ENCODE measurements at regions of chr2 and their contacts with region 1.

Region 1: GRCh38 chr2:18546567-18546966 is 13.9 kb downstream of the RDH14 start:
- DNase-seq: no peak
- ATAC-seq: no peak
- H3K4me3 ChIP-seq: no peak overlapping the region
- H3K27ac ChIP-seq: no peak overlapping the region
- H3K4me1 ChIP-seq: no peaks in the 10 kb centered on the region
- H3K27me3 ChIP-seq: no peaks in the 10 kb centered on the region
- CTCF ChIP-seq: no peak

Region 2: GRCh38 chr2:18369760-18370159 is 176.8 kb before region 1 on chr2:
- CTCF ChIA-PET with region 1: no interaction called
- POLR2A ChIA-PET with region 1: no interaction called
- in situ Hi-C with region 1: no loop called
- intact Hi-C with region 1: no loop called
- DNase-seq: no peak
- ATAC-seq: no peak
- H3K4me3 ChIP-seq: no peak overlapping the region
- H3K27ac ChIP-seq: no peak overlapping the region
- H3K4me1 ChIP-seq: no peaks in the 10 kb centered on the region
- H3K27me3 ChIP-seq: no peaks in the 10 kb centered on the region
- CTCF ChIP-seq: no peak

Region 3: DNA sequence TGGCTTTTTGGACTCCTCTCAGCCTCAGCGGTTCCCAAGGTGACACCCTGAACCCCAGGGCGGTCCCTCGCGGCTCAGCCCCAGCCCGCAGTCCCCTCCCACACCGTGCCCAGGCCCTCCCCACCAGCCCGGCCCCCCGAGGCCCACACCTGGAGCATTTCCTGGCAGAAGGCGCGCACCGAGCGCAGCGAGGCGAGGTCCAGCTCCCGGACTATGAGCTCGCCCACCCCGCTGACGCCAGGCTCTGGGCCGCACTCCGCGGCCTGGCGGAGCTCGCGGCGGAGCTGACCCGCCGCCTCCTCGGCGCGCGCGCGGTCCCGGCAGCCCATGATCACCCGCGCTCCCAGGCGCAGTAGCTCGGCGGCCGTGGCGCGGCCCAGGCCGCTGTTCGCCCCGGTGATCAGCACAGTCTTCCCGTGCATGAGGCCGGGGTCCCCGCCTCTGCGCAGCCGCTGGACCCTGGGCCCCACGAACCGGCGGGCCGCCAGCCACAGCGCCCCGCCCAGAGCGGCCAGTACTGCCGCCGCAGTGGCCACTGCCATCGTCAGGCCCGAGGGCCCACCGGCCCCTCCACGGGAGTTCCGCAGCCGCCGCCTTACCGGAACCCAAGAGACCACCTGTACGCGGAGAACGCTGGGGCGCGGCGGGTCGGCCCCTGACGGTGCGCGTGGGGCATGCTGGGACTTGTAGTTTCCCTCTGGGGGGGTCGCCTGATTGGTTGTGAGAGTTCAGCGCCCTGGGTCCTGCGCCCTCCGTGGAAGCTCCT is 13.6 kb after region 1 on chr2 and contains the start of gene RDH14:
- CTCF ChIA-PET with region 1: interaction called, 21 read pairs
- POLR2A ChIA-PET with region 1: no interaction called
- in situ Hi-C with region 1: no loop called
- intact Hi-C with region 1: no loop called
- DNase-seq: peak; percentile 61
- ATAC-seq: peak; percentile 100
- H3K4me3 ChIP-seq: peak within 1 kb of the TSS; percentile 85 to 88
- H3K27ac ChIP-seq: peak within 1 kb of the TSS; percentile 93
- H3K4me1 ChIP-seq: peaks cover 4% of the 10 kb centered on the region; the same call in 1 of the 2 replicates
- H3K27me3 ChIP-seq: no peaks in the 10 kb centered on the region
- CTCF ChIP-seq: no peak
- total RNA-seq, gene RDH14: 15.4 TPM

Measured in Panc1 (cell line).